Sigmoid colon (tissue), 7 donors: ENCODE measurements at regions of chr19 and their contacts with region 1.

Region 1: GRCh38 chr19:57191141-57192076 is at the start of gene ZNF264:
- DNase-seq: peak; percentile 95
- H3K4me3 ChIP-seq: peak within 1 kb of the TSS; percentile 69 to 96 (median 82)
- H3K27ac ChIP-seq: peak within 1 kb of the TSS; percentile 82 to 90 (median 86)
- H3K4me1 ChIP-seq: peaks cover 0 to 30% (median 16%) of the 10 kb centered on the region in 4 donors
- H3K27me3 ChIP-seq: no peaks in the 10 kb centered on the region
- CTCF ChIP-seq: no peak
- EP300 ChIP-seq: no peak
- POLR2A ChIP-seq: peak; percentile 11 to 33
- total RNA-seq, gene ZNF264: 18.5 to 39.6 (median 28.0) TPM

Region 2: GRCh38 chr19:57171551-57172081 is 19.8 kb before region 1 on chr19:
- intact Hi-C with region 1: loop called (anchors 2 kb)
- DNase-seq: peak; percentile 76
- H3K4me3 ChIP-seq: peak overlapping the region; percentile 23 to 47 (median 42)
- H3K27ac ChIP-seq: peak overlapping the region; percentile 69 to 77 (median 72)
- H3K4me1 ChIP-seq: peaks cover 0 to 8% (median 4%) of the 10 kb centered on the region in 4 donors
- H3K27me3 ChIP-seq: no peaks in the 10 kb centered on the region
- CTCF ChIP-seq: no peak
- EP300 ChIP-seq: no peak
- POLR2A ChIP-seq: no peak

Region 3: DNA sequence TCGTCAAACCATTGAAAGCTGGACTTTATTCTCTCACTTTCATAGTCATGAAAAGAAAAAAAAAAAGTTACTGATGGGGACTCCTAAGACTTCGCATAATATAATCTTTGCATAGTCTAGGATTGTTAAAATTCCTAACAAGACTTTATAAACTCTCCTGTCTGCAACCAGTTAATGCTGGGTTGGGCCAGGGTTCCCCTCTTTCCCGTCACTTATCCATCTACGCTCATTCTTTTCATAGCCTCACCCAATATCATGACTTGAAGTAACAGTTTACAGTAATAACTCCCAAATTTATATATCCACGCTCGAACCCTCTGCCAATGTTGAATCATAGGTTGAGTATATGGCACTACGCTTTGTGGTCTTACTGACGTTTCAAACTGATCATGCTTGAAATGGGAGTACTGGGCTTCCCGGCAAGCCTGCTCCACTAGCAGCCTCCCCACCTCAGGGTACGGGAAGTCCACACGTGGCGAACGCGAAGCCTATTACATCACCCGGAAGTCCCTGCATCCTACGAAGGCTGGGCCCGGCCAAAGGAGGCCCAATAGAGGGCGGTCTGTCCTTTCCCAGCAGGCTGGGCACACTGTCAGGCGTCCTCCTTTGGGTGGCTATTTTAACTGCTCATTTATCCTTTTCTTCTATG is 88.1 kb after region 1 on chr19:
- intact Hi-C with region 1: loop called (anchors 5 kb)
- DNase-seq: peak; percentile 96
- H3K4me3 ChIP-seq: peak overlapping the region; percentile 82 to 97 (median 84)
- H3K27ac ChIP-seq: peak overlapping the region; percentile 95 to 100 (median 98)
- H3K4me1 ChIP-seq: peaks cover 0 to 44% (median 30%) of the 10 kb centered on the region in 4 donors
- H3K27me3 ChIP-seq: no peaks in the 10 kb centered on the region
- CTCF ChIP-seq: no peak
- EP300 ChIP-seq: peak in 2 of 4 donors; percentile 82 to 85
- POLR2A ChIP-seq: no peak